WTC11 (cell line): ENCODE measurements at regions of chr18 and their contacts with region 1.

Region 1: DNA sequence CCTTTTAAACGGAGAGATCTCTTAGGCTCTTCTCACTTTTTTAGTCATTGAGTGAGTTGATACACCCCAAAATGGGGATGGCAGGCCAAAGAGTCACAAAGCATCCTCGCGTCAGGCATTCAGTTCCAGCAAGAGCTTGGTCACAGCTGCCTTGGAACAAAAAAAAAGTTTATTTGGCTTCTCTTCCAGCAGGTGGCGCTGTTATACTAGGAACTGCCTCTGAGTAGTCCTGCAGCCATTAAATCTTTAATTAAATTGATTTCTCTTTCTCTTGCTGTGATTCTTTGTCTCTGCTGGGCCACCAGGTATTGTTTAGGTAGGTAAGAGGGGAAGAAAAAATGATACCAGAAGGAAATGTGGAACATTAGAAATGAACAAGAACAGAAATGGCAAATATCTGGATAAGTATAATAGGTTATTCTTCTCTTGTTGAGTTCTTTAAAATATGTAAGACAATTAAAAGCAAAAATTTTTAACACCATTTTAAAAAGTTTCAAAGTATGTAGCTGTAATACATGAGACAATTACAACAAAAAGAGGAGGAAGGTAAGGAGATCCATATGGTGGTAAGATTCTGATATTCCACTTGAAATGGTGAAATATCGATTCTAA is 175.1 kb downstream of the GALNT1 start:
- DNase-seq: peak; percentile 63
- ATAC-seq: peak; percentile 85
- H3K4me3 Mint-ChIP-seq: no peak overlapping the region
- H3K27ac Mint-ChIP-seq: no peak overlapping the region
- H3K4me1 Mint-ChIP-seq: peaks cover 26% of the 10 kb centered on the region
- H3K27me3 Mint-ChIP-seq: no peaks in the 10 kb centered on the region; the same call in 1 of the 2 replicates
- CTCF ChIP-seq: peak; percentile 76; the same call in 1 of the 2 replicates

Region 2: DNA sequence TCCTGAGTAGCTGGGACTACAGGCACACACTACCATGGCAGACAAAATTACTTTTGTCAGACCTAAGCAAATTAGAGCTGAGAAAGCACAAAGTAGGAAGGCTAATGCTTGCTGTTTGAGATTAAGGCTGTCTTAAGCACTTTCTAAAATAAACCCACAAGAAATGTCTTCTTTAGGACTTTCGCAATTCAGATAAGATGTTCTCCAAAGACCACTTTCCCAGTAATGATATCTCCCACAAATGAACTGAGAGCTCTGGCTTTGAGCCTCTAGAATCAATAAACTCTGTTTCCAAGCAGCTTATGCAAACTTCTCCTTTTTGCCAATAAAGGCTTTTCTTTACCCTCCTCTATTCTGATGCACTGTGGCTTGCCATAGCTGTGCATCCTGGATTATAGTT is 207.0 kb before region 1 on chr18:
- CTCF ChIA-PET with region 1: no interaction called
- POLR2A ChIA-PET with region 1: no interaction called
- DNase-seq: no peak
- ATAC-seq: no peak
- H3K4me3 Mint-ChIP-seq: no peak overlapping the region
- H3K27ac Mint-ChIP-seq: no peak overlapping the region
- H3K4me1 Mint-ChIP-seq: no peaks in the 10 kb centered on the region
- H3K27me3 Mint-ChIP-seq: no peaks in the 10 kb centered on the region
- CTCF ChIP-seq: no peak

Region 3: DNA sequence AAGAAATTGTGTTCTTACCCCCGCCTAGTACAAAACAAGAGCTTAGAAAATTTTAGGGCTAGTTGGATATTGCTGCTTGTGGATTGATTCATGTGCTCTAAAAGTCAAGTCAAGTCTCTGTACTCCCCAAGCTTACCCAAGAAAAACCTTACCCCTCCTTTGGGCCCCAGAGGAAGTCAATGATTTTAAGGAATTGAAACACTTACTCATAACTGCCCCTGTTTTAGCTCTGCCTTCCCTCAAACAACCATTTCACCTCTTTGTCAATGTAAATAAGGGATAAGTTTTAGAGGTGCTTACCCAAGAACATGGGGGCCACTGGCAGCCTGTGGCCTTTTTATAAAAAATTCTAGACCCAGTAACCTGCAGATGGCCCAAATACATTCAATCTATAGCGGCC is 79.2 kb after region 1 on chr18:
- CTCF ChIA-PET with region 1: interaction called, 13 read pairs
- POLR2A ChIA-PET with region 1: interaction called, 6 read pairs
- DNase-seq: no peak
- ATAC-seq: no peak
- H3K4me3 Mint-ChIP-seq: no peak overlapping the region
- H3K27ac Mint-ChIP-seq: 0 out of 2 replicates have a peak overlapping the region, but pooled peaks have one; percentile 31
- H3K4me1 Mint-ChIP-seq: peaks cover 25% of the 10 kb centered on the region
- H3K27me3 Mint-ChIP-seq: peaks cover 20% of the 10 kb centered on the region
- CTCF ChIP-seq: no peak

Region 4: DNA sequence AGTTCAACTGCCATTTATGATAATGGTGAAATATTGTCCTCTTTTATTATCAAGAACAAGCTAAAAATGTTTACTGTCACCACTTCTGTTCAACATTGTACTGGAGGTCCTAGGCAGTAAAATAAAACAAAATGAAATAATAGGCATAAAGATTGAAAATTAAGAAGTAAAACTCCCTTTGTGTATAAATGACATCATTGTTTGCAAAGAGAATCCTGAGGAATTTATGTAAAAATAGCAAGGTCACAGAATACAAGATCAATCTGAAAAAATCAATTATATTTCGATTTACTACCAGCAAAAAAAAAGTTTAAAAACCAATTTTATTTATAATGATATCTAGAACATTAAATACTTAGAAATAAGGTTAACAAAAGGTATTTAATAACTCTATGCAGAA is 176.2 kb after region 1 on chr18:
- CTCF ChIA-PET with region 1: no interaction called
- POLR2A ChIA-PET with region 1: no interaction called
- DNase-seq: no peak
- ATAC-seq: no peak
- H3K4me3 Mint-ChIP-seq: no peak overlapping the region
- H3K27ac Mint-ChIP-seq: no peak overlapping the region
- H3K4me1 Mint-ChIP-seq: peaks cover 6% of the 10 kb centered on the region
- H3K27me3 Mint-ChIP-seq: no peaks in the 10 kb centered on the region
- CTCF ChIP-seq: no peak

Region 5: GRCh38 chr18:35972197-35973052 is 215.8 kb after region 1 on chr18 and contains the start of gene RMP24:
- CTCF ChIA-PET with region 1: interaction called, 10 read pairs
- POLR2A ChIA-PET with region 1: interaction called, 3 read pairs
- DNase-seq: peak; percentile 94
- ATAC-seq: peak; percentile 95
- H3K4me3 Mint-ChIP-seq: peak within 1 kb of the TSS; percentile 98
- H3K27ac Mint-ChIP-seq: peak within 1 kb of the TSS; percentile 95
- H3K4me1 Mint-ChIP-seq: peaks cover 21% of the 10 kb centered on the region
- H3K27me3 Mint-ChIP-seq: peaks cover 5% of the 10 kb centered on the region
- CTCF ChIP-seq: no peak

Region 6: GRCh38 chr18:36017232-36017631 is 260.6 kb after region 1 on chr18:
- CTCF ChIA-PET with region 1: interaction called, 12 read pairs
- POLR2A ChIA-PET with region 1: no interaction called
- DNase-seq: no peak
- ATAC-seq: peak; percentile 12
- H3K4me3 Mint-ChIP-seq: no peak overlapping the region
- H3K27ac Mint-ChIP-seq: peak overlapping the region; percentile 93
- H3K4me1 Mint-ChIP-seq: peaks cover 7% of the 10 kb centered on the region
- H3K27me3 Mint-ChIP-seq: no peaks in the 10 kb centered on the region
- CTCF ChIP-seq: no peak

Region 7: DNA sequence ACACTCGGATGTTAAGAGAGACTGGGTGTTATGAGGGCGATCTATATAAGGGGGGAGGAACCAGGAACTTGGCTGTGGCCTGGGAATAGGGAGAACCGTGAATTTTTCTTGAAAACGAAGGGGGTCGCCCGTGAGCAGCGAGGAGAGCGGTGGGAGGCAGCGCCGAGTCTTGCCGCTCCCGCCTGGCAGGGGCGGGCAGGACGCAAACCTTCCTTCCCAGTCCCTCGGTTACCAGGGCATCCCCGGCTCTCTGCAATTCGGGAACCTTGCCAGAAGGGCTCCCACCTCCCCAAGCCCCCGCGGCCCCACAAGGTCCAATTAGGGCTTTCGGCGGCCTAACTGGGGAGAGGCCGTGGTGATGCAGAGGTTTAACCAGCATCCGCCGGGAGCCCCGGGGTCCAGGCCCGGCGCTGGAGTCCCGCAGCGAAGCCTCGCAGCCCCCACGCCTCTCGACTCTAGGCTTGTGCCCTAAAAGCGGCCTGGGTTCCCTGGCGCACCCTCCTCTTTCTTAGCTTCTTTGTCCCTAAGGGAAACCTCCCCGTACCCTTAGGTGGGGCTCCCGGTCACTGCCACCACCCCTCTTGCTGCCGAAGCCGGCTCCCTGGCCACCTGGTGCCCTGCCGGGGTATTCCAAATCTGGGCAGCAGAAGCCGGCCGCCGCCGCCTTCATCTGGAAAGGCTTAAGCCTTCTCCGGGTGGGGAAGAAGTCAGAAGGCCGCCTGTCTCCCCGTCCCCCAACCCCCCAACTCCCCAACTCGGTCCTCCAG is 540.2 kb after region 1 on chr18:
- CTCF ChIA-PET with region 1: no interaction called
- POLR2A ChIA-PET with region 1: no interaction called
- DNase-seq: peak; percentile 85
- ATAC-seq: peak; percentile 67
- H3K4me3 Mint-ChIP-seq: no peak overlapping the region
- H3K27ac Mint-ChIP-seq: no peak overlapping the region
- H3K4me1 Mint-ChIP-seq: peaks cover 5% of the 10 kb centered on the region
- H3K27me3 Mint-ChIP-seq: peaks cover 27% of the 10 kb centered on the region
- CTCF ChIP-seq: no peak